PC-9 (cell line): ENCODE measurements at regions of chr17 and their contacts with region 1.

Region 1: GRCh38 chr17:2592971-2593820 is at the start of gene PAFAH1B1:
- DNase-seq: peak; percentile 77 to 97
- H3K4me3 ChIP-seq: peak within 1 kb of the TSS; percentile 81
- H3K27ac ChIP-seq: peak within 1 kb of the TSS; percentile 86
- H3K4me1 ChIP-seq: peaks cover 36% of the 10 kb centered on the region
- H3K27me3 ChIP-seq: no peaks in the 10 kb centered on the region
- CTCF ChIP-seq: no peak
- total RNA-seq, gene PAFAH1B1: 152 and 159 TPM in 2 replicates

Region 2: GRCh38 chr17:2511462-2512369 is 81.5 kb before region 1 on chr17 and contains the start of gene METTL16:
- CTCF ChIA-PET with region 1: no interaction called
- POLR2A ChIA-PET with region 1: interaction called, 18 read pairs
- intact Hi-C with region 1: loop called (anchors 1 kb)
- DNase-seq: peak; percentile 97
- H3K4me3 ChIP-seq: peak within 1 kb of the TSS; percentile 82
- H3K27ac ChIP-seq: peak within 1 kb of the TSS; percentile 94
- H3K4me1 ChIP-seq: peaks cover 13% of the 10 kb centered on the region
- H3K27me3 ChIP-seq: no peaks in the 10 kb centered on the region
- CTCF ChIP-seq: no peak
- total RNA-seq, gene METTL16: 40.2 and 46.2 TPM in 2 replicates

Region 3: DNA sequence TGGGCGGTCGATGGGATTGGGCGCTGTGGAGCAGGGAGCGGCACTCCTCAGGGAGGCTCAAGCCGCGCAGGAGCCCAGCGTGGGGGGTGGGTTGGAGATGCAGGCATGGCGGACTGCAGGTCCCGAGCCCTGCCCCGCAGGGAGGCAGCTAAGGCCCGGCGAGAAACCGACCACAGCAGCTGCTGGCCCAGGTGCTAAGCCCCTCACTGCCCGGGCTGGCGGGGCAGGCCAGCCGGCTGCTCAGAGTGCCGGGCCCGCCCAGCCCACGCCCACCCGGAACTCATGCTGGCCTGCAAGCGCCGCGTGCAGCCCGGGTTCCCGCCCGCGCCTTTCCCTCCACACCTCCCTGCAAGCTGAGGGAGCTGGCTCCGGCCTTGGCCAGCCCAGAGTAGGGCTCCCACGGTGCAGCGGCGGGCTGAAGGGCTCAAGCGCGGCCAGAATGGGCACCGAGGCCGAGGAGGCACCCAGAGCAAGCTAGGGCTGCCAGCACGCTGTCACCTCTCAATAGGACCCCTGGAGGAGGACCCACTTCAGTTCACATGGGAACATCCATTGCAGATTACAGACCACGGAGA is 61.0 kb before region 1 on chr17:
- CTCF ChIA-PET with region 1: no interaction called
- POLR2A ChIA-PET with region 1: no interaction called
- intact Hi-C with region 1: no loop called
- DNase-seq: no peak
- H3K4me3 ChIP-seq: no peak overlapping the region
- H3K27ac ChIP-seq: no peak overlapping the region
- H3K4me1 ChIP-seq: no peaks in the 10 kb centered on the region
- H3K27me3 ChIP-seq: no peaks in the 10 kb centered on the region
- CTCF ChIP-seq: no peak

Region 4: GRCh38 chr17:2624292-2624731 is 31.1 kb after region 1 on chr17:
- CTCF ChIA-PET with region 1: interaction called, 19 read pairs
- POLR2A ChIA-PET with region 1: interaction called, 7 read pairs
- intact Hi-C with region 1: no loop called
- DNase-seq: no peak
- H3K4me3 ChIP-seq: no peak overlapping the region
- H3K27ac ChIP-seq: no peak overlapping the region
- H3K4me1 ChIP-seq: no peaks in the 10 kb centered on the region
- H3K27me3 ChIP-seq: no peaks in the 10 kb centered on the region
- CTCF ChIP-seq: no peak

Region 5: DNA sequence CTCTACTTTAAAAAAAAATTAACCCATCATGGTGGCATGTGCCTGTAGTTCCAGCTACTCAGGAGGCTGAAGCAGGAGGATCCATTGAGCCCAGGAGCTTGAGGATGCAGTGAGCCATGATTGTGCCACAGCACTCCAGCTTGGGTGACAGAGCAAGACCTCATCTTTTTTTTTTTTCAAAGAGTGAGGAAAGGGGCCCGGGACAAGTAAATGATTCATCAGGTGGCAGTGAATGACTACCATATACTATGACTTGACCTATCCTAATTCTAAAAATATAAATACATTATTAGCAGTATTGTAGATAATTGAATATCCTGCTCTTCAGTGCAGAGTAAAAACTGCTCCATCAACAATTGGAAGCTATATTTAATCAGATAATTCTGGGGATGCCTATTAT is 63.1 kb after region 1 on chr17:
- CTCF ChIA-PET with region 1: no interaction called
- POLR2A ChIA-PET with region 1: interaction called, 15 read pairs
- intact Hi-C with region 1: no loop called
- DNase-seq: no peak
- H3K4me3 ChIP-seq: no peak overlapping the region
- H3K27ac ChIP-seq: no peak overlapping the region
- H3K4me1 ChIP-seq: peaks cover under 1% of the 10 kb centered on the region
- H3K27me3 ChIP-seq: no peaks in the 10 kb centered on the region
- CTCF ChIP-seq: no peak

Region 6: GRCh38 chr17:2672026-2672425 is 78.8 kb after region 1 on chr17:
- CTCF ChIA-PET with region 1: no interaction called
- POLR2A ChIA-PET with region 1: no interaction called
- intact Hi-C with region 1: loop called (anchors 10 kb)
- DNase-seq: no peak
- H3K4me3 ChIP-seq: no peak overlapping the region
- H3K27ac ChIP-seq: no peak overlapping the region
- H3K4me1 ChIP-seq: no peaks in the 10 kb centered on the region
- H3K27me3 ChIP-seq: no peaks in the 10 kb centered on the region
- CTCF ChIP-seq: no peak

Region 7: GRCh38 chr17:2700516-2701141 is 107.4 kb after region 1 on chr17:
- CTCF ChIA-PET with region 1: no interaction called
- POLR2A ChIA-PET with region 1: no interaction called
- intact Hi-C with region 1: no loop called
- DNase-seq: no peak
- H3K4me3 ChIP-seq: no peak overlapping the region
- H3K27ac ChIP-seq: no peak overlapping the region
- H3K4me1 ChIP-seq: no peaks in the 10 kb centered on the region
- H3K27me3 ChIP-seq: no peaks in the 10 kb centered on the region
- CTCF ChIP-seq: no peak

Region 8: GRCh38 chr17:2808367-2809335 is 215.5 kb after region 1 on chr17:
- CTCF ChIA-PET with region 1: no interaction called
- POLR2A ChIA-PET with region 1: no interaction called
- intact Hi-C with region 1: no loop called
- DNase-seq: no peak
- H3K4me3 ChIP-seq: no peak overlapping the region
- H3K27ac ChIP-seq: no peak overlapping the region
- H3K4me1 ChIP-seq: peaks cover 9% of the 10 kb centered on the region; the same call in 1 of the 2 replicates
- H3K27me3 ChIP-seq: no peaks in the 10 kb centered on the region
- CTCF ChIP-seq: no peak